ENCODE measurements at regions of chr9 and their contacts with region 1.

Region 1: GRCh38 chr9:35795695-35796094 is 4.3 kb downstream of the NPR2 start:
- DNase-seq: no peak
- ATAC-seq: no peak
- H3K4me3 ChIP-seq: no peak overlapping the region
- H3K4me3 Mint-ChIP-seq: no peak overlapping the region
- H3K27ac ChIP-seq: no peak overlapping the region
- H3K27ac Mint-ChIP-seq: no peak overlapping the region
- H3K4me1 ChIP-seq: peaks cover under 1% of the 10 kb centered on the region
- H3K4me1 Mint-ChIP-seq: no peaks in the 10 kb centered on the region
- H3K27me3 ChIP-seq: no peaks in the 10 kb centered on the region
- H3K27me3 Mint-ChIP-seq: no peaks in the 10 kb centered on the region
- CTCF ChIP-seq: no peak

Region 2: DNA sequence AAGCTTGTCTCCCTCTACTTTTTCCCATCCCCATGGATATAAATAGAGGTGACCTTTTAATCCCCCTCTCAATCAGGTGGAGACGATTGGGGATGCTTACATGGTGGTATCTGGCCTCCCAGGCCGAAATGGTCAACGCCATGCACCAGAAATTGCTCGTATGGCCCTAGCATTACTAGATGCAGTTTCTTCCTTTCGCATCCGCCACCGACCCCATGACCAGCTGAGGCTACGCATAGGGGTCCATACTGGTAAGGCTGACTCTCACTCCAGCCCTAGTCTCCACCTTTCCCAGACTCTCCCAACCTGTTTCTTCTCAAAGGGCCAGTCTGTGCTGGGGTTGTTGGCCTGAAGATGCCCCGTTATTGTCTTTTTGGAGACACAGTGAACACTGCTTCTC is 12.7 kb after region 1 on chr9:
- CTCF ChIA-PET with region 1: interaction called, 10 read pairs
- POLR2A ChIA-PET with region 1: no interaction called
- intact Hi-C with region 1: loop called in 1 of 2 experiments (anchors 2 kb)
- DNase-seq: no peak
- ATAC-seq: no peak
- H3K4me3 ChIP-seq: no peak overlapping the region
- H3K4me3 Mint-ChIP-seq: no peak overlapping the region
- H3K27ac ChIP-seq: no peak overlapping the region
- H3K27ac Mint-ChIP-seq: no peak overlapping the region
- H3K4me1 ChIP-seq: peaks cover 28% of the 10 kb centered on the region
- H3K4me1 Mint-ChIP-seq: peaks cover 25% of the 10 kb centered on the region
- H3K27me3 ChIP-seq: no peaks in the 10 kb centered on the region
- H3K27me3 Mint-ChIP-seq: no peaks in the 10 kb centered on the region
- CTCF ChIP-seq: no peak

Region 3: DNA sequence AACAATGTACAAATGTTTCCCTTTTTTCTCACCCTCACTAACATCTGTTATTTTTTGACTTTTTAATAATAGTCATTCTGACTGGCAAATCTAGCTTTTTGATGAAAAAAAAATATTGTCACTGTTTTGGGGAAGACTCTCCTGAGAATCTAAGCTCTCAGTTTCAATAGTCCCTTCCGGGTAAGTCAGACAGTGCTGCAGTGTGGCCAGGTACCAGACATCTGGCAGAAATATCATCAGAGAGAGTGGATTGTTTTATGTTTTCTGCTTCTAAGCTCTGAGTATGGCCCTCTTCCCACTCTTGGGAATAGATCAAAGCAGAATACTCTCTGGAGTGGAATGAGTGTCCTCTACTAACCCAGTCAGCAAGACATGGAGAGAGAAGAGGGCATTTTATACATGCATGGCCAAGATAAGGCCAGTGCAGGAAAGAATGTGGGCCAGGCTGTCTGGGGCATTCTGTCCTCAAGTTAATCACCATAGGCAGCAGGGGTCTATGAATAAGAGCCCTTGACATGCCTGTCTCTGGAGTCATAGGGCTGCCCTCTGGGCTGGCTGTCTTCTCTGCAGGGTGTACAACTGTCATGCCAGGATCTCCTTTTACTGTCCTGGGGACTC is 200.8 kb after region 1 on chr9:
- CTCF ChIA-PET with region 1: no interaction called
- POLR2A ChIA-PET with region 1: no interaction called
- intact Hi-C with region 1: no loop called
- DNase-seq: no peak
- ATAC-seq: no peak
- H3K4me3 ChIP-seq: no peak overlapping the region
- H3K4me3 Mint-ChIP-seq: no peak overlapping the region
- H3K27ac ChIP-seq: no peak overlapping the region
- H3K27ac Mint-ChIP-seq: no peak overlapping the region
- H3K4me1 ChIP-seq: no peaks in the 10 kb centered on the region
- H3K4me1 Mint-ChIP-seq: no peaks in the 10 kb centered on the region
- H3K27me3 ChIP-seq: peaks cover 2 to 5% of the 10 kb centered on the region in 2 experiments
- H3K27me3 Mint-ChIP-seq: peaks cover 33% of the 10 kb centered on the region
- CTCF ChIP-seq: no peak

Region 4: GRCh38 chr9:36136272-36136893 is 340.7 kb after region 1 on chr9 and contains the start of gene GLIPR2:
- CTCF ChIA-PET with region 1: no interaction called
- POLR2A ChIA-PET with region 1: no interaction called
- intact Hi-C with region 1: no loop called
- DNase-seq: peak; percentile 53 to 91 (median 72)
- ATAC-seq: peak; percentile 93
- H3K4me3 ChIP-seq: peak within 1 kb of the TSS; percentile 85
- H3K4me3 Mint-ChIP-seq: peak within 1 kb of the TSS; percentile 98
- H3K27ac ChIP-seq: peak within 1 kb of the TSS; percentile 53 to 59
- H3K27ac Mint-ChIP-seq: peak within 1 kb of the TSS; percentile 92
- H3K4me1 ChIP-seq: peaks cover 53% of the 10 kb centered on the region
- H3K4me1 Mint-ChIP-seq: peaks cover 51% of the 10 kb centered on the region
- H3K27me3 ChIP-seq: no peaks in the 10 kb centered on the region
- H3K27me3 Mint-ChIP-seq: no peaks in the 10 kb centered on the region
- CTCF ChIP-seq: no peak
- total RNA-seq, gene GLIPR2: 13.6 to 13.7 TPM

Measured in CD4-positive, alpha-beta T cell (primary cell).